ENCODE measurements at regions of chr2 and their contacts with region 1.

Region 1: DNA sequence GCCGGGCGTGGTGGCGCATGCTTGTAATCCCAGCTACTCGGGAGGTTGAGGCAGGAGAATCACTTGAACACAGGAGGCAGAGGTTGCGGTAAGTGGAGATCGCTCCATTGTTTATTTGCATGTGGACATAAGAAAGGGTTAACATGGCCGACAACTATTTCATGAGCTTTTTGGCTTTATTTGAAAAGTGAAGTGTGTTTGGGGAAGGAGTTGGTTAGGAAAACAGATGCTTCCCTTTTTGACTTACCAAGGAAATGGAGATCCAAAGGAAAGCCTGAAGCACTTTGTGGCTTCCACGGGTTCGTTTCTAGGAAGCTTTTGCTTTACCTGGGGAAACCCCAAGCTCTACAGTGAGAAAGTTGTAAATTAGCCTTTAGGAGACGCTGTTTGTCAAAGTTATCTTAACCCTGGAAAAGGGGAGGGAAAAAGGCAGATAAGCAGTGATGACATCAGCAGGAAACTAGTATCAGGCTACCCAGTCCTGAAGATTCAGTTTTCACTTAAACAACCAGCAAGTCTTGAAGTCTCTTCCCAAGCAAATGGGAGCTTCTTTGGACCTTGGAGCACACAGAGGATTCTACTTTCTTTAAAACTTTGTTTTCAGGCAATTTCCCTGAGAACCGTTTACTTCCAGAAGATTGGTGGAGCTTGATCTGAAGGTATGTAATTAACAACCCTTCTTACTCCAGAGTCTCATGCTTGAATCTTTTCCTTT is at the start of gene CASP10:
- DNase-seq: peak in 4 of 14 experiments; percentile 39 to 89 (median 88)
- ATAC-seq: peak; percentile 89
- H3K4me3 ChIP-seq: peak within 1 kb of the TSS; percentile 77
- H3K4me3 Mint-ChIP-seq: peak within 1 kb of the TSS; percentile 96
- H3K27ac ChIP-seq: peak within 1 kb of the TSS; percentile 62 to 69
- H3K27ac Mint-ChIP-seq: peak within 1 kb of the TSS; percentile 91
- H3K4me1 ChIP-seq: peaks cover 38% of the 10 kb centered on the region
- H3K4me1 Mint-ChIP-seq: peaks cover 45% of the 10 kb centered on the region
- H3K27me3 ChIP-seq: no peaks in the 10 kb centered on the region
- H3K27me3 Mint-ChIP-seq: no peaks in the 10 kb centered on the region
- CTCF ChIP-seq: peak; percentile 64
- total RNA-seq, gene CASP10: 12.6 to 13.7 TPM

Region 2: GRCh38 chr2:200963124-200963917 is 219.5 kb before region 1 on chr2 and contains the start of gene ORC2:
- CTCF ChIA-PET with region 1: interaction called, 8 read pairs
- POLR2A ChIA-PET with region 1: interaction called, 8 read pairs
- intact Hi-C with region 1: loop called (anchors 2 to 5 kb)
- DNase-seq: peak; percentile 87 to 96 (median 90)
- ATAC-seq: peak; percentile 95
- H3K4me3 ChIP-seq: peak within 1 kb of the TSS; percentile 98
- H3K4me3 Mint-ChIP-seq: peak within 1 kb of the TSS; percentile 99
- H3K27ac ChIP-seq: peak within 1 kb of the TSS; percentile 89 to 92
- H3K27ac Mint-ChIP-seq: peak within 1 kb of the TSS; percentile 100
- H3K4me1 ChIP-seq: peaks cover 25% of the 10 kb centered on the region
- H3K4me1 Mint-ChIP-seq: peaks cover 73% of the 10 kb centered on the region
- H3K27me3 ChIP-seq: no peaks in the 10 kb centered on the region
- H3K27me3 Mint-ChIP-seq: no peaks in the 10 kb centered on the region
- CTCF ChIP-seq: peak; percentile 74
- total RNA-seq, gene ORC2: 25.0 to 26.6 TPM

Region 3: DNA sequence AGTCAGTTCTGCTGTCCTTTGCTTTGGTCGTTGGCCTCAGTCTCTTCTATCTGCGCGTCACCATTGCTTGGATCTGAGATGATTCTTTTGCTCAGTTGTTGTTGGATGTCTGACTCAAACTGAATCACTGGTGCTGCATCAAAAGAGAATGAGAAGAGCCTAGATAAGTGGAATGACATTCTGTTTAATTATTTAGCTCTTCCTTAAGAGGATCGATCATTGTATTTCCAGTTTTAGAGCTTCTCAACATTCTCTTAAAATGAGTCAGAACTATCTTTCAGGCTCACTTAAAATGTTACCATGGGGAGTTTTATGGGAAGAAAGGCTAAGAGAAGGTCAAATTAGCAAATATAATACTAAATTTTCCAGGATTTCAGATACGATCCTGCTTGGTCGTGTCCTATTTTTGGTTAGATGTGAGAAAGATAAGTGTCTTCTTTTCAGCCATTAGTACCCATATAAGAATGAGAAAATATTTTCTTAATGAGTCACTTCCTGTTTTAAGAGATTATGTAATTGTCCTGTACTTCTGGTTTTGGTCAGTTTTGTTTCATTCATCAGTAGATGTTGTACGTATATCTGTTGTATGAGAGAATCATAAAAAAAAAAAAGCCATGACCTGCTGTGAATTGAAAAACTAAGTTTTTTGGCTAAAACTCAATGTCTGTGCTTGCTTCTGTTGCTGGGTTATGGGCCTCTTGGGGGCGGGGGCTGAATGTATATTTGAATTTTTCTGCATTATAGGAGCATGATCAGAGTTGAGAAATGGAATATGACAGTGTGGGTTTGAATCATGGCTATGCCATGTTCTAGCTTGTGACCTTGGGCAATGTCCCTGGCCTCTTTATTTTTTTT is 31.5 kb before region 1 on chr2:
- CTCF ChIA-PET with region 1: no interaction called
- POLR2A ChIA-PET with region 1: no interaction called
- intact Hi-C with region 1: no loop called
- DNase-seq: peak in 3 of 14 experiments; percentile 33 to 44 (median 41)
- ATAC-seq: no peak
- H3K4me3 ChIP-seq: no peak overlapping the region
- H3K4me3 Mint-ChIP-seq: no peak overlapping the region
- H3K27ac ChIP-seq: peak overlapping the region; percentile 13 to 68
- H3K27ac Mint-ChIP-seq: peak overlapping the region; percentile 87
- H3K4me1 ChIP-seq: peaks cover 19% of the 10 kb centered on the region
- H3K4me1 Mint-ChIP-seq: peaks cover 38% of the 10 kb centered on the region
- H3K27me3 ChIP-seq: no peaks in the 10 kb centered on the region
- H3K27me3 Mint-ChIP-seq: no peaks in the 10 kb centered on the region
- CTCF ChIP-seq: no peak

Region 4: GRCh38 chr2:201208563-201209252 is 25.9 kb after region 1 on chr2:
- CTCF ChIA-PET with region 1: interaction called, 7 read pairs
- POLR2A ChIA-PET with region 1: interaction called, 7 read pairs
- intact Hi-C with region 1: loop called in 1 of 2 experiments (anchors 2 kb)
- DNase-seq: peak in 2 of 14 experiments; percentile 53 to 62
- ATAC-seq: no peak
- H3K4me3 ChIP-seq: no peak overlapping the region
- H3K4me3 Mint-ChIP-seq: no peak overlapping the region
- H3K27ac ChIP-seq: no peak overlapping the region
- H3K27ac Mint-ChIP-seq: peak overlapping the region; percentile 31
- H3K4me1 ChIP-seq: peaks cover 37% of the 10 kb centered on the region
- H3K4me1 Mint-ChIP-seq: peaks cover 52% of the 10 kb centered on the region
- H3K27me3 ChIP-seq: no peaks in the 10 kb centered on the region
- H3K27me3 Mint-ChIP-seq: no peaks in the 10 kb centered on the region
- CTCF ChIP-seq: no peak

Region 5: DNA sequence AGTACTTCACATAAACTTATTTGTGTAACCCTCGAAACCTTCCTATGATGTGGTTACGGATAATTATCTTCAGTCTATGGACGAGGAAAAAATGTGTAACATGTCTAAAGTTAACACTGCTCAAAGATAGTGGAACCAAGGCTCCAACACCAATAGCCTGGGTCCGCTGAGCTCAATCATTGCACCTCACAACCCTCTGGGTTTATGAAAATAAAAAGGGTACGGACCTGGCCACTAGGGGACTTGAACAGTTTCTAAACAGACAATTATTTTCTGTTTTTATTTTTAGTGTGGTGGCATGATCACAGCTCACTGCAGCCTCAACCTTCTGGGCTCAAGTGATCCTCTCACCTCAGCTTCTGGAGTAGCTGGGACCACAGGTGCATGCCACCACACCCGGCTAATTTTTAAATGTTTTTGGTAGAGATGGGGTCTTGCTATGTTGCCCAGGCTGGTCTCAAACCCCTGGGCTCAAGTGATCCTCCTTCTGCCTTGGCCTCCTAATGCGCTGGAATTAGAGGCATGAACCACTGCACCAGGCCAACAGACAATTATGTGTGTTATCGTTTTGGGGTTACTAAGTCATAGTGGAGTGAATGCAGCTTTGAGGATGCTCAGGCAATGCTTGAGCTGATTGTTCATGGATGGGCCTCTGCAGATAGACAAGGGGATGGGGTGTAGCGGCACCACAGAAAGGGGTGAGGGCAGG is 87.6 kb after region 1 on chr2:
- CTCF ChIA-PET with region 1: no interaction called
- POLR2A ChIA-PET with region 1: no interaction called
- intact Hi-C with region 1: loop called in 1 of 2 experiments (anchors 5 kb)
- DNase-seq: no peak
- ATAC-seq: no peak
- H3K4me3 ChIP-seq: no peak overlapping the region
- H3K4me3 Mint-ChIP-seq: peak overlapping the region; percentile 38
- H3K27ac ChIP-seq: no peak overlapping the region
- H3K27ac Mint-ChIP-seq: peak overlapping the region; percentile 75
- H3K4me1 ChIP-seq: peaks cover 80% of the 10 kb centered on the region
- H3K4me1 Mint-ChIP-seq: peaks cover 86% of the 10 kb centered on the region
- H3K27me3 ChIP-seq: no peaks in the 10 kb centered on the region
- H3K27me3 Mint-ChIP-seq: no peaks in the 10 kb centered on the region
- CTCF ChIP-seq: no peak

Region 6: DNA sequence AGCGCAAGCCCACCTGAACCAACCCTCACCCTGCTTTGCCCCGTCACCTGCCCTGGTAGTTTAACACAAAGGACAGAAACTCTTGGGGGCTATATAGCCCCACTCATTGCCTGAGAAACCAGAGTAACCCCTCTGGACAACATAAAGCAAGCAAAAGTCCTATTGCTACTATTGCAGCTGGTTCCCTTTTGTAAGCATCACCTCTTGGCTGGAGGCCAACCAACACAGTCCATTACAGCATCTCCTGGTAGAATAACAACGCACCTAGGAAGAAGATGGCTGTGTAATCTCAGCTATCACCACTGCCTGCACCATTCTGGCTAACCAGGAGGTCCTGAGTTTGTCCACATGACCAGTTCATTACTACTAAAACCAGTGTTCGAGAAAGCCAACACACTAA is 137.9 kb after region 1 on chr2:
- CTCF ChIA-PET with region 1: no interaction called
- POLR2A ChIA-PET with region 1: no interaction called
- intact Hi-C with region 1: no loop called
- DNase-seq: no peak
- ATAC-seq: no peak
- H3K4me3 ChIP-seq: no peak overlapping the region
- H3K4me3 Mint-ChIP-seq: no peak overlapping the region
- H3K27ac ChIP-seq: no peak overlapping the region
- H3K27ac Mint-ChIP-seq: no peak overlapping the region
- H3K4me1 ChIP-seq: no peaks in the 10 kb centered on the region
- H3K4me1 Mint-ChIP-seq: no peaks in the 10 kb centered on the region
- H3K27me3 ChIP-seq: no peaks in the 10 kb centered on the region
- H3K27me3 Mint-ChIP-seq: no peaks in the 10 kb centered on the region
- CTCF ChIP-seq: no peak

Region 7: GRCh38 chr2:201754717-201755415 is 572.1 kb after region 1 on chr2:
- CTCF ChIA-PET with region 1: no interaction called
- POLR2A ChIA-PET with region 1: no interaction called
- intact Hi-C with region 1: no loop called
- DNase-seq: no peak
- ATAC-seq: no peak
- H3K4me3 ChIP-seq: no peak overlapping the region
- H3K4me3 Mint-ChIP-seq: no peak overlapping the region
- H3K27ac ChIP-seq: no peak overlapping the region
- H3K27ac Mint-ChIP-seq: no peak overlapping the region
- H3K4me1 ChIP-seq: no peaks in the 10 kb centered on the region
- H3K4me1 Mint-ChIP-seq: no peaks in the 10 kb centered on the region
- H3K27me3 ChIP-seq: no peaks in the 10 kb centered on the region
- H3K27me3 Mint-ChIP-seq: no peaks in the 10 kb centered on the region
- CTCF ChIP-seq: no peak

Region 8: GRCh38 chr2:202178342-202178958 is 995.6 kb after region 1 on chr2:
- CTCF ChIA-PET with region 1: interaction called, 3 read pairs
- POLR2A ChIA-PET with region 1: no interaction called
- intact Hi-C with region 1: loop called in 1 of 2 experiments (anchors 5 kb)
- DNase-seq: peak in 13 of 14 experiments; percentile 10 to 73 (median 35)
- ATAC-seq: no peak
- H3K4me3 ChIP-seq: no peak overlapping the region
- H3K4me3 Mint-ChIP-seq: no peak overlapping the region
- H3K27ac ChIP-seq: no peak overlapping the region
- H3K27ac Mint-ChIP-seq: no peak overlapping the region
- H3K4me1 ChIP-seq: no peaks in the 10 kb centered on the region
- H3K4me1 Mint-ChIP-seq: no peaks in the 10 kb centered on the region
- H3K27me3 ChIP-seq: no peaks in the 10 kb centered on the region
- H3K27me3 Mint-ChIP-seq: peaks cover 8% of the 10 kb centered on the region
- CTCF ChIP-seq: peak; percentile 87